ENCODE measurements at regions of chr5 and their contacts with region 1.

Region 1: GRCh38 chr5:150458819-150459557 is 9.4 kb upstream of the RPS14 start:
- DNase-seq: peak; percentile 88
- H3K4me3 Mint-ChIP-seq: peak overlapping the region; percentile 45
- H3K27ac Mint-ChIP-seq: no peak overlapping the region
- H3K4me1 Mint-ChIP-seq: peaks cover 32% of the 10 kb centered on the region
- H3K27me3 Mint-ChIP-seq: no peaks in the 10 kb centered on the region

Region 2: GRCh38 chr5:150523472-150524350 is 64.7 kb after region 1 on chr5:
- CTCF ChIA-PET with region 1: interaction called, 31 read pairs
- intact Hi-C with region 1: loop called (anchors 1 kb)
- DNase-seq: peak; percentile 24
- H3K4me3 Mint-ChIP-seq: no peak overlapping the region
- H3K27ac Mint-ChIP-seq: no peak overlapping the region
- H3K4me1 Mint-ChIP-seq: no peaks in the 10 kb centered on the region
- H3K27me3 Mint-ChIP-seq: no peaks in the 10 kb centered on the region

Region 3: DNA sequence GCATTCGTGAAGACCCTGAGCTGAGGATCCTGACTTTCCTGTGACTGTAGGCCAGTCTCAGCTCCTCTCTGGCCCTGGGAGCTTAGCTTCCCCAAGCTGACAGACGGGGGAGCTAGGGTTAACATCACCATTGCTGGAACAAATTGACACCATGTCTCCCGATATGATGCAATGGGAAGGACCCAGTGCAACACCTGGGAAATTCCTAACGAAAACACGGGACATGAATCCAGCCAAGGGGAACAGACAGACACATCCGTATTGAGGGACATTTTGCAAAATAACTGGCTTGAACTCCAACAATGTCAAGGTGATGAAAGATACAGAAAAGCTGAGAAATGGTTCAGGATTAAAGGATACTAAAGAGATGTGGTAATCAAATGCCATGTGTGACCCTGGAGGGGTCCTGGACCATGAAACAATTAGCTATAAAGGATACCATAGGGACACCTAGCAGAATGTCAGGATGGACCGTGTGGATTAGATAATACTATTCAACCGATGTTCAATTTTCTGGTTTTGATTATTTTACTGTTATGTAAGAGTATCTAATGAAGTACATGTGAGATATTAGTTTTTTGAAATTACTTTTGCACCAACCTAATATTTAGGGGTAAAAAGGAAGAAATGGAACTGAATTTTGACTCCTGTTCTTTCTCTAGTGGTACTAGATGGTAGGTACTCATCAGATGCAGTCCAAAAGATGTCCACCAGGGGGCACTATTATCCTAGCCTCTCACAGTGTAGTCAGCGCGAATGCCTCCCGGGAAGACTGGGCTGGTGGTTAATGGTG is 101.6 kb after region 1 on chr5:
- CTCF ChIA-PET with region 1: interaction called, 46 read pairs
- intact Hi-C with region 1: loop called (anchors 1 kb)
- DNase-seq: peak; percentile 96
- H3K4me3 Mint-ChIP-seq: no peak overlapping the region
- H3K27ac Mint-ChIP-seq: no peak overlapping the region
- H3K4me1 Mint-ChIP-seq: no peaks in the 10 kb centered on the region
- H3K27me3 Mint-ChIP-seq: no peaks in the 10 kb centered on the region

Region 4: GRCh38 chr5:150846654-150847333 is 387.8 kb after region 1 on chr5:
- CTCF ChIA-PET with region 1: interaction called, 13 read pairs
- intact Hi-C with region 1: loop called (anchors 1 kb)
- DNase-seq: peak; percentile 83
- H3K4me3 Mint-ChIP-seq: peak overlapping the region; percentile 79
- H3K27ac Mint-ChIP-seq: peak overlapping the region; percentile 80
- H3K4me1 Mint-ChIP-seq: peaks cover 25% of the 10 kb centered on the region
- H3K27me3 Mint-ChIP-seq: no peaks in the 10 kb centered on the region

Region 5: GRCh38 chr5:151150471-151151262 is 691.7 kb after region 1 on chr5:
- CTCF ChIA-PET with region 1: no interaction called
- intact Hi-C with region 1: loop called (anchors 5 kb)
- DNase-seq: peak; percentile 91
- H3K4me3 Mint-ChIP-seq: peak overlapping the region; percentile 64
- H3K27ac Mint-ChIP-seq: peak overlapping the region; percentile 90
- H3K4me1 Mint-ChIP-seq: peaks cover 94% of the 10 kb centered on the region
- H3K27me3 Mint-ChIP-seq: no peaks in the 10 kb centered on the region